ENCODE measurements at regions of chr4 and their contacts with region 1.

Region 1: GRCh38 chr4:91113130-91113706 is 986.0 kb downstream of the CCSER1 start:
- DNase-seq: peak; percentile 10
- H3K4me3 ChIP-seq: no peak overlapping the region
- H3K27ac ChIP-seq: no peak overlapping the region
- H3K4me1 ChIP-seq: no peaks in the 10 kb centered on the region
- CTCF ChIP-seq: peak; percentile 80

Region 2: DNA sequence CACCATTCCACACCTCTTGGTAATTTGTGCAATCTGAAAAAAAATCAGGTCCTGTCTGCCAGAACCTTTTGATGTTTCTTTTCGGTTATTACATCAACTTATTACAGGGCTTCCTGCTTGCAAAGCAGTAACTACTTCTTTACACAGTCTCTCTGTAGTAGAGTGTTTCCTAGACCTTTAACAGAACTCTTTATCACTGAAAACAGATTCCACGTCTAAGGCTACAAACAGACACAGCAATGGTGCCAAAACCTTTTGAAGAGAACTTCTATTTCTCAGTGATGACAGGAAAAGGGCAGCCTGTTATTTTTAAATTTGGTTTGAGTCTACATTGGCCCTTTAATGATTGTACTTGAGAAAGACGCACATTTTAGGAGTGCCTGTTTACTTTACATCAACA is 477.0 kb after region 1 on chr4:
- CTCF ChIA-PET with region 1: no interaction called
- POLR2A ChIA-PET with region 1: no interaction called
- intact Hi-C with region 1: no loop called
- DNase-seq: no peak
- H3K4me3 ChIP-seq: no peak overlapping the region
- H3K27ac ChIP-seq: no peak overlapping the region
- H3K4me1 ChIP-seq: no peaks in the 10 kb centered on the region
- CTCF ChIP-seq: no peak

Region 3: DNA sequence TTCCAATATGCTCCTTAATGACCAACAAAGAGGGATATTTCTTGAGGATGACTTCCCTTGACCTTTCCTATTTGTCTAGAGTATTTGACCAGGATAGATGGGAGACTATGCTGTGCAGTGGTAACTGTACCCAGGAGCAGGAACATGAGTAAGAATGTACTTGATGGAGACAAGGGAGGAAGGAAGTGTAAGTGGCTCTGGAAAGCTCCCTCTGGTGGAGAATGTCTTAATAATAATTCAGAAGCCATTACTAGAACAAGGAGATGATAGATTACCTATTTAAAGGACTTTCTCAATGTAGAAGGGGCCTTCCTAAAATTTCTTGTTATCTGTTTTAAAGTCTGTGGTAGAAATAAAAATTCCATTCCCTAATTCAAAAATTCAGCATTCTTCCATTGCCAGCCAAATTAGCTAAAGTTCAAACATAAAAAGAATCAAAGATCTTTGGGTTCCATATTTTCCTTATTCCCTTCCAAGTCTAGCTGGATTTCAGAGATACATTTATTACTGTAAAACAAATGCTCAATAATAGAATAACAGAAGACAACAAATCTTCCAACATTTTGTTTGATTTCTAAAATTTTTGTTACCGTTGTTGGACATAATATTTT is 1274.3 kb after region 1 on chr4:
- CTCF ChIA-PET with region 1: no interaction called
- POLR2A ChIA-PET with region 1: no interaction called
- intact Hi-C with region 1: loop called (anchors 5 kb)
- DNase-seq: peak; percentile 28
- H3K4me3 ChIP-seq: no peak overlapping the region
- H3K27ac ChIP-seq: no peak overlapping the region
- H3K4me1 ChIP-seq: no peaks in the 10 kb centered on the region
- CTCF ChIP-seq: peak; percentile 79

Measured in OCI-LY7 (cell line).